ENCODE measurements at regions of chr17 and their contacts with region 1.

Region 1: GRCh38 chr17:45218895-45219661 is 2.6 kb upstream of the FMNL1 start:
- DNase-seq: no peak
- ATAC-seq: peak; percentile 42
- H3K4me3 ChIP-seq: no peak overlapping the region
- H3K27ac ChIP-seq: no peak overlapping the region
- H3K4me1 ChIP-seq: peaks cover 13% of the 10 kb centered on the region
- H3K27me3 ChIP-seq: no peaks in the 10 kb centered on the region
- CTCF ChIP-seq: peak; percentile 92 to 97 (median 94)
- EP300 ChIP-seq: no peak
- POLR2A ChIP-seq: no peak
- RAD21 ChIP-seq: peak; percentile 97

Region 2: GRCh38 chr17:44794851-44795413 is 424.1 kb before region 1 on chr17:
- CTCF ChIA-PET with region 1: no interaction called
- POLR2A ChIA-PET with region 1: no interaction called
- RAD21 ChIA-PET with region 1: no interaction called
- SMC1A ChIA-PET with region 1: no interaction called
- in situ Hi-C with region 1: no loop called
- intact Hi-C with region 1: no loop called
- DNase-seq: no peak
- ATAC-seq: no peak
- H3K4me3 ChIP-seq: no peak overlapping the region
- H3K27ac ChIP-seq: no peak overlapping the region
- H3K4me1 ChIP-seq: no peaks in the 10 kb centered on the region
- H3K27me3 ChIP-seq: no peaks in the 10 kb centered on the region
- CTCF ChIP-seq: no peak
- EP300 ChIP-seq: no peak
- POLR2A ChIP-seq: no peak
- RAD21 ChIP-seq: no peak

Region 3: GRCh38 chr17:45038728-45039634 is 180.1 kb before region 1 on chr17:
- CTCF ChIA-PET with region 1: no interaction called
- POLR2A ChIA-PET with region 1: no interaction called
- RAD21 ChIA-PET with region 1: no interaction called
- SMC1A ChIA-PET with region 1: no interaction called
- in situ Hi-C with region 1: no loop called
- intact Hi-C with region 1: no loop called
- DNase-seq: no peak
- ATAC-seq: no peak
- H3K4me3 ChIP-seq: no peak overlapping the region
- H3K27ac ChIP-seq: peak overlapping the region; percentile 69
- H3K4me1 ChIP-seq: peaks cover 6% of the 10 kb centered on the region
- H3K27me3 ChIP-seq: no peaks in the 10 kb centered on the region
- CTCF ChIP-seq: no peak
- EP300 ChIP-seq: no peak
- POLR2A ChIP-seq: no peak
- RAD21 ChIP-seq: no peak

Region 4: DNA sequence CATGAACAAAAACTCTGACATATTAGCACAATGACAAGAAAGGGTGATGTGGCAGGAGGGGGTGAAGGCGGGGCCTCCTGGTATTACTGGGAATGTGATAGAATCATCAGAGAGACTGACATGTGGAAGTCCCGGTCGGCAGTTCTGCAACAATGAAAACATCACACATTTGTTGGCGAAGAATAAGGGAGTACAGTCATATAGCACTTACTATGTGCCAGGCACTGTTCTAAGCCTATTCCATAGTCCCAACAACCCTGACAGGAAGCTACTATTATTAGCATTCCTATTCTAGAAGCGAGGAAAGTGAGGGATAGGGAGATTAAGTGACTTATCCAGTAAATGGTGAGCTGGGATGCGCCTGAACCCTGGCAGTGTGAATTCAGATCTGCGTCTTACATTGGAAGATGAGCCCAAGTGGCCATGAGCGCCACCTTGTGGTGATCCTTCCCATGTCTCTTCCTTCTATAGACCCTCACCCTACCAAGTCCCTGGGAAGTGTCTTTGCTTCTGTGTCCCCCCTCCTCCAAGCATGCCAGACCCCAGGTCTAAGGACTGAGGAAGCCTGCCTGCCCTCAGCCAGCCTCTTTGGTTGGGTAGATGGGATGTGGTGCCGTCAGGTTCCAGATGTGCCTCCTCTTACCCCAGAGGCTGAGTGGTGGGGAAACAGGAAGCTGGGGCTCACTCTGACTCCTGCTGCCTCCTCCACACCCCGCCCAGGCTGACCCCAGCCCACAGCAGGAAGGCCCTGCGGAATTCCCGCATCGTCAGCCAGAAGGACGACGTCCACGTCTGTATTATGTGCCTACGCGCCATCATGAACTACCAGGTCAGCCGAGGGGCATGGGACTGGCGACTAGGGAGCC is 16.6 kb after region 1 on chr17:
- CTCF ChIA-PET with region 1: interaction called, 429 read pairs
- POLR2A ChIA-PET with region 1: interaction called, 53 read pairs
- RAD21 ChIA-PET with region 1: interaction called, 225 read pairs
- SMC1A ChIA-PET with region 1: interaction called, 201 read pairs
- in situ Hi-C with region 1: no loop called
- intact Hi-C with region 1: loop called (anchors 1 kb)
- DNase-seq: no peak
- ATAC-seq: peak; percentile 85
- H3K4me3 ChIP-seq: no peak overlapping the region
- H3K27ac ChIP-seq: no peak overlapping the region
- H3K4me1 ChIP-seq: peaks cover 2% of the 10 kb centered on the region
- H3K27me3 ChIP-seq: no peaks in the 10 kb centered on the region
- CTCF ChIP-seq: peak; percentile 78 to 84 (median 82)
- EP300 ChIP-seq: no peak
- POLR2A ChIP-seq: no peak
- RAD21 ChIP-seq: peak; percentile 69

Region 5: DNA sequence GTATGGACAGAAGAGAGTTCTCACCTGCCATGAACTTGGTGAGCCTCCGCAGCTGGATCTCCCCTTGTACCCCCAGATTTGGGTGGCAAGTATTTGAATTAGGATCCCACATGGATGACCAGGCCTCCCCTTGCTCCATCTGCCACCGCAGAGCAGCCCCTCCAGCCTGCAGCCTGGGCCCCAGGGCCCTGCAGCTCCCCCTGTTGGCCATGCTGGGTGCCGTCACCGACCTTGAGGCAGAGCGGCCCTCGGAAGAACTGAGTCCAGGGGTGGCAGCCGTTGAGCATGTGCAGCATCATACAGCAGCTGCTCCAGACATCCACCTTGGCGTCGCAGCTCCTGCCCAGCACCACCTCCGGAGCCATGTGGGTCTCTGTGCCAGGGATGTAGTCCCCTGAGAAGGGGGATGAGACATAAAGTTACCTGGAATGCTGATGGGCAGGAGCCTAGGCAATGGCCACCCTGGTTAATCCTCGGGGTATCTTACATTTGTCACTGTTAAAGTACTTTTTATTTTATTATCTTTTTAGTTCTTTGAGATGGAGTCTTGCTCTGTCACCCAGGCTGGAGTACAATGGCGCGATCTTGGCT is 51.8 kb after region 1 on chr17:
- CTCF ChIA-PET with region 1: interaction called, 104 read pairs
- POLR2A ChIA-PET with region 1: interaction called, 5 read pairs
- RAD21 ChIA-PET with region 1: interaction called, 44 read pairs
- SMC1A ChIA-PET with region 1: interaction called, 51 read pairs
- in situ Hi-C with region 1: no loop called
- intact Hi-C with region 1: loop called (anchors 5 kb)
- DNase-seq: no peak
- ATAC-seq: peak; percentile 80
- H3K4me3 ChIP-seq: no peak overlapping the region
- H3K27ac ChIP-seq: no peak overlapping the region
- H3K4me1 ChIP-seq: 0 out of 2 replicates have a peak, but pooled peaks cover 4% of the 10 kb centered on the region
- H3K27me3 ChIP-seq: no peaks in the 10 kb centered on the region
- CTCF ChIP-seq: peak; percentile 45 to 82 (median 62)
- EP300 ChIP-seq: no peak
- POLR2A ChIP-seq: no peak
- RAD21 ChIP-seq: peak; percentile 44

Region 6: DNA sequence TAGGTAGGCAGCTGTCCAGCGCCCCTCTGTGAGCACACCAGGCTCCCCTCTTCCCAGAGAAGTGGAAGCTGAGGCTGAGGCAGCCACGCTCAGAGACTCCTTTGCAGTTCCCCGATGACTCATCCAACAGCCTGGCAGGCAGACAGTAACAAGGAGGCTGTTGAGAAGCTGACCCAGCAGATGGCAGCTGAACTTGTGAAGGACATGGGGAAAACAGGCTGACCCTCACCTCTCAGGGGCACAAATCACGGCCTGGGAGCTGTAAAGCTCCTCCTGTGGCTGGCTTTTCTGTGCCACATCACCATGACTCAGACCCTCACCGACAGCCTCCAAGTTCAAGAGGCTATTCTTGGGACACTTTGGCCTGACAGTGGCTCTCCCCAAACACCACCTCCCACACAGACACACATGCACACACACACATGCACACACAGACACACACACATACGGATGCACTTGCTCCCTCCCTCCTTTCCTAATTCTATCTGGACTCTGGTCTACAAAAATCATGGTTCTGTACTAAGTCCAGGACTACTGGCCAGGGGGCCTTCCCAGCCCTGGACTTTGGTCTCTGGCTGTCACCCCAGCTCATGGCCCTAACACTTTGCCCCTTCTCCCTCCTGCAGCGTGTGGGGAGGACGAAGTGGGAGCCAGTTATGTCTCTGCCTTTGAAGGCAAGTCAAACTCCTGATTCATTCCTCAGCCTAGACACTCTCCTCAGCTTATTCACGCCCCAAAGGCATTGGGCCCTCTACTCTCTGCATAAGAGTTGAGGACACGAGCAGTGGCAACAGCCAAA is 74.5 kb after region 1 on chr17:
- CTCF ChIA-PET with region 1: interaction called, 6 read pairs
- POLR2A ChIA-PET with region 1: no interaction called
- RAD21 ChIA-PET with region 1: interaction called, 3 read pairs
- SMC1A ChIA-PET with region 1: interaction called, 14 read pairs
- in situ Hi-C with region 1: no loop called
- intact Hi-C with region 1: no loop called
- DNase-seq: no peak
- ATAC-seq: peak; percentile 63
- H3K4me3 ChIP-seq: no peak overlapping the region
- H3K27ac ChIP-seq: peak overlapping the region; percentile 42
- H3K4me1 ChIP-seq: peaks cover 76% of the 10 kb centered on the region
- H3K27me3 ChIP-seq: no peaks in the 10 kb centered on the region
- CTCF ChIP-seq: peak in 1 of 3 experiments; percentile 11; a peak in 1 of 6 replicates
- EP300 ChIP-seq: no peak
- POLR2A ChIP-seq: no peak
- RAD21 ChIP-seq: no peak

Region 7: GRCh38 chr17:45834471-45835396 is 615.7 kb after region 1 on chr17:
- CTCF ChIA-PET with region 1: no interaction called
- POLR2A ChIA-PET with region 1: no interaction called
- RAD21 ChIA-PET with region 1: no interaction called
- SMC1A ChIA-PET with region 1: interaction called, 3 read pairs
- in situ Hi-C with region 1: no loop called
- intact Hi-C with region 1: loop called (anchors 10 kb)
- DNase-seq: no peak
- ATAC-seq: no peak
- H3K4me3 ChIP-seq: no peak overlapping the region
- H3K27ac ChIP-seq: no peak overlapping the region
- H3K4me1 ChIP-seq: no peaks in the 10 kb centered on the region
- H3K27me3 ChIP-seq: no peaks in the 10 kb centered on the region; a peak in 2 of 4 replicates
- CTCF ChIP-seq: no peak
- EP300 ChIP-seq: no peak
- POLR2A ChIP-seq: no peak
- RAD21 ChIP-seq: no peak

Measured in GM12878 (cell line).